T-cell (primary cell): ENCODE measurements at regions of chr2 and their contacts with region 1.

Region 1: DNA sequence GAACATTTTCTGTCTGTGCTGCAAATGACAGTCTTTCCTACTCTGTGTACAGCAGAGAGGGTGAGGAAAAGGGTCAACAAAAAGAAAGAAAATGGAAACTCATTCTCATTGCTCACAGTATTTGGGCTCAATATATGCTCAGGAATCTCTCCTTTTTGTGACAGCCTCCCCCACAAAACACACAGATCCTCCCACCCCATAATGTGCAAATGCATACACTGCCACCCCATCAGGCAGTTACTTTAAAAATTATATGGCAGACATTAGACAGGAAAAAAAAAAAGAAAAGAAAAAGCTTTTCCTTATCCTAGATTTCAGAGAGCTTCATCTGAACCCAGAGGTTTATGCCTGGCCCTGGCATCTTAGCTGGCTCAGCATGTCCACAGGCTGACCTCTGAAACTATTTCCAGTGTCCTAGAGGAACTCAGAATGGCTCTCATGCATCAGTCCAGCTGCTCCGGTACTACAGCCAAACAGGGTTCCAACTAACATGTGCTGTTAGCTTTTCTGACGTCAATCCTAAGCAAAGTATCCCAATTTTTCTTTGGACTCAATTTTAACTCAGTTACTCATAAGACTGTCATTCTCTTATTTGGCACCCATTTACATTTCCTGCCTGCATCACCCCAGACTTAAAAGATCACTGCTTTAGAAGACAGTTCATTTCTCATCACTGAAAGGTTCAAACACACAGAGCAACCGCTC is 105.9 kb downstream of the RBMS1 start:
- DNase-seq: no peak
- ATAC-seq: peak in 2 of 4 experiments; percentile 44 to 56
- H3K4me3 ChIP-seq: no peak overlapping the region
- H3K4me3 Mint-ChIP-seq: peak overlapping the region in 2 of 3 donors; percentile 59 to 75
- H3K27ac ChIP-seq: no peak overlapping the region
- H3K27ac Mint-ChIP-seq: peak overlapping the region; percentile 40 to 81
- H3K4me1 ChIP-seq: peaks cover 52 to 72% of the 10 kb centered on the region in 2 experiments
- H3K4me1 Mint-ChIP-seq: peaks cover 90 to 92% (median 91%) of the 10 kb centered on the region in 3 donors
- H3K27me3 ChIP-seq: no peaks in the 10 kb centered on the region
- H3K27me3 Mint-ChIP-seq: no peaks in the 10 kb centered on the region

Region 2: DNA sequence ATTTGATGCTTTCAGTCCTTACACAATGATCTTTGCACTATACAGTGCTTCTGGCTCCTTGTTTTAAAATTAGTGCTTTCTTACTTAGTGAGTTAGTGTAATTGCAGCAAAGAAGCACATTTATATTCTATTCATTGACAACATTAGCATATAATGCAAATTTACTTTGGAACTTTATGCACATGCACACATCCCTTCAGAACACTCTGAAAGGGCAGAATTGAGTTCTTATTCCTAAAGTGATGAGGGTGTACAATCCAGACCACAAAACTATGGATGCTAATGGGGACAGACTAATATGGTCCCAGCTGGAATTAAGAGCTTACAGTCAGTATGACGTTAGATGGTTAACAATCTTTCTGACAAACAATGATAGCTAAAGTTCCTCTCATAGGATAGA is 21.2 kb before region 1 on chr2:
- CTCF ChIA-PET with region 1: interaction called in 1 of 2 experiments, 4 read pairs
- POLR2A ChIA-PET with region 1: interaction called, 4 to 12 read pairs
- DNase-seq: no peak
- ATAC-seq: no peak
- H3K4me3 ChIP-seq: no peak overlapping the region
- H3K4me3 Mint-ChIP-seq: no peak overlapping the region
- H3K27ac ChIP-seq: no peak overlapping the region
- H3K27ac Mint-ChIP-seq: no peak overlapping the region
- H3K4me1 ChIP-seq: peaks cover 20 to 36% of the 10 kb centered on the region in 2 experiments
- H3K4me1 Mint-ChIP-seq: peaks cover 79 to 87% (median 86%) of the 10 kb centered on the region in 3 donors
- H3K27me3 ChIP-seq: no peaks in the 10 kb centered on the region
- H3K27me3 Mint-ChIP-seq: no peaks in the 10 kb centered on the region